Activated CD8-positive, alpha-beta T cell treated with anti-CD3 and anti-CD28 coated beads for 36 hours (primary cell): ENCODE measurements at regions of chr5 and their contacts with region 1.

Region 1: DNA sequence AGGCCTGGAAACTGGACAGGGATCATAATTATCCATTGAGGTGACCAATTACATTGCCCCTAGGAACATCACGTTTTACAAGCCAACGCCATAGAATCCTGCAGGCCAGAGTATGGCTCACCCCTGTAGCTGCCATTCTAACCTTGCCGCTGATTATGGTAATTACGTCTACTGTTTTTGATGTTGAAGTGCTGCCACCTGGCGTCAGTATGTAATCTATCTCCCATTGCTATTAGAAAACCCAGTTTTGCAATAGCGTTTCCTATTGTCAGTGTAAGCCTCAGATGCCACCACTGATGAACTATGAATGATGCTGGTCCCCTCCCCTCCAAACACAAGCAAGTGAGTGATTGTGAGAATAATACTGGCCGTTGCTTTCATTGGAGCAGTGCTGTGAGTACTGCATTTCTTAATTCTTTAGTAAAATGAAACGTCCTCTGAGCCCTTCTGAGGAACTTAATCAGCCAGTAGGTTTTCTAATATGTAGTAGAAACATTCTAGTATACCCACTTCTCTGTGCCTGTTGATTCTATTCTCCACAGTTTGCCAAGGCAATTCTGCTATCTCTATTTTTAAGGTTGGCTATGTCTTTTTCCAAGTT is 100.5 kb upstream of the NMUR2 start:
- DNase-seq: peak; percentile 65
- ATAC-seq: peak; percentile 70
- H3K4me3 Mint-ChIP-seq: no peak overlapping the region
- H3K27ac Mint-ChIP-seq: no peak overlapping the region
- H3K4me1 Mint-ChIP-seq: no peaks in the 10 kb centered on the region
- H3K27me3 Mint-ChIP-seq: peaks cover 7% of the 10 kb centered on the region
- CTCF ChIP-seq: peak; percentile 66

Region 2: DNA sequence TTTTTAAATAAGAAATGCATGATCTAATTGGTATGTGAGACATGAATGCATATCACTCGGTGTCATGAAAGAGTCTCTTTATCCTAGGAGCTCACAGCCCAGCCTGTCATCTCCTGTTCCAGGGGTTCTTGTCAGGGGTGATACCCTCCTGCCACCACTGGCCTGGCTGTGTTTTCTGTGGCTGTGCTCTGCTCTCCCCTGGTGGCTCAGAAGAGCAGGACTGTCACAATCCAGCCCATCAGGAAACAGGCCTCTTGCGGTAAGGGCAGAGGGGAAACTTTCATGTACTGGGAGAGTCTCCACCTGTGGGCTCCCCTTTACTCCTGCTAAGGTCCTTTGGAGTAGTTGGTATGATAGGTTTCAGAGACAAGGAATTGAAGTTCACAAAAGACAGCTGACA is 340.7 kb before region 1 on chr5:
- CTCF ChIA-PET with region 1: no interaction called
- POLR2A ChIA-PET with region 1: no interaction called
- intact Hi-C with region 1: loop called (anchors 10 kb)
- DNase-seq: no peak
- ATAC-seq: no peak
- H3K4me3 Mint-ChIP-seq: no peak overlapping the region
- H3K27ac Mint-ChIP-seq: no peak overlapping the region
- H3K4me1 Mint-ChIP-seq: no peaks in the 10 kb centered on the region
- H3K27me3 Mint-ChIP-seq: peaks cover 3% of the 10 kb centered on the region
- CTCF ChIP-seq: no peak